AG04449 (cell line): ENCODE measurements at regions of chr3 and their contacts with region 1.

Region 1: DNA sequence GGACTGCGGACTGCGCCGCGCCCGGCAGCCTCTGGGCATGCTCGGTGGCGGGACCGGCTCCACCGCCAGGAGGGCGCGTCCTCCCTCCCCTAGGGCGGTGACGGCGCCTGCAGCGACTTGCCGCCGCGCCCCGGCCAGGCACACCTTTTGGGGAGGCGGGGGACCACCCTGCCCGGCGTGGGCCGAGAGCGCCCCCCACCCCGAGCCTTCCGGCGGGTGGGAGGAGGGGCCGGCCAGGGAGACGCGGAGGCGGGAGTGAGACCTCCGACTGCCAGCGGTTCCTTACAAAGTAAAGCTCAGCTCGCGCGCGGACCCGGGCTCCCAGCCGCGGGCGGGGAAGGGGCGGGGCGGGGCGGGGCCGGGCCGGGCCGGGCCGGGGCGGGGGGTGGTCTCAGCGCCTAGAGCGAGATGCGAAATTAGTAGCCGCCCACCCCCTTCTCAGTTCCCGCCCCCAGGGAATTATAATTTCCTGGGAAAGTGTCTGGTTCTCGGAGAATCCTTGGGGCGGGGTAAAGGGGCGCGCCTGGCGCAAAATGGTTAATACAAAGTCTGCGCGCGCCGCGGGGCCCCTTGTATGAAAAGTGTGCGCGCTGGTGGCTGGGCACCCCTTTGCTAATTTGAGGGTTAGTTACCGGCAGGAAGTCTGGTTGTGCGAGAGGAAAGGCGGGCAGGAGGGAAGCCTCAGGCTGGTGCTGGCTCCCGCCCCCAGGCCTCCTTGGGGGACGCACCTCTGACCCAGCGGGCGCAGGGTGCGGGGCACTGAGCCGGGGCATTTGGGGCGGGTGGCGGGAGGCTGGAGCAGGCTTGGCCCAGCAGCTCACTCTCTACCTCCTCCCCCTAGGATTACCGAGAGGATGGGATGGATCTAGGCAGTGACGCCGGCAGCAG is 224.8 kb upstream of the IL12A start:
- DNase-seq: no peak
- H3K4me3 ChIP-seq: peak overlapping the region; percentile 89
- CTCF ChIP-seq: peak; percentile 21

Region 2: GRCh38 chr3:159616212-159616825 is 147.5 kb before region 1 on chr3:
- CTCF ChIA-PET with region 1: interaction called, 13 read pairs
- POLR2A ChIA-PET with region 1: no interaction called
- DNase-seq: no peak
- H3K4me3 ChIP-seq: no peak overlapping the region
- CTCF ChIP-seq: peak; percentile 65

Region 3: DNA sequence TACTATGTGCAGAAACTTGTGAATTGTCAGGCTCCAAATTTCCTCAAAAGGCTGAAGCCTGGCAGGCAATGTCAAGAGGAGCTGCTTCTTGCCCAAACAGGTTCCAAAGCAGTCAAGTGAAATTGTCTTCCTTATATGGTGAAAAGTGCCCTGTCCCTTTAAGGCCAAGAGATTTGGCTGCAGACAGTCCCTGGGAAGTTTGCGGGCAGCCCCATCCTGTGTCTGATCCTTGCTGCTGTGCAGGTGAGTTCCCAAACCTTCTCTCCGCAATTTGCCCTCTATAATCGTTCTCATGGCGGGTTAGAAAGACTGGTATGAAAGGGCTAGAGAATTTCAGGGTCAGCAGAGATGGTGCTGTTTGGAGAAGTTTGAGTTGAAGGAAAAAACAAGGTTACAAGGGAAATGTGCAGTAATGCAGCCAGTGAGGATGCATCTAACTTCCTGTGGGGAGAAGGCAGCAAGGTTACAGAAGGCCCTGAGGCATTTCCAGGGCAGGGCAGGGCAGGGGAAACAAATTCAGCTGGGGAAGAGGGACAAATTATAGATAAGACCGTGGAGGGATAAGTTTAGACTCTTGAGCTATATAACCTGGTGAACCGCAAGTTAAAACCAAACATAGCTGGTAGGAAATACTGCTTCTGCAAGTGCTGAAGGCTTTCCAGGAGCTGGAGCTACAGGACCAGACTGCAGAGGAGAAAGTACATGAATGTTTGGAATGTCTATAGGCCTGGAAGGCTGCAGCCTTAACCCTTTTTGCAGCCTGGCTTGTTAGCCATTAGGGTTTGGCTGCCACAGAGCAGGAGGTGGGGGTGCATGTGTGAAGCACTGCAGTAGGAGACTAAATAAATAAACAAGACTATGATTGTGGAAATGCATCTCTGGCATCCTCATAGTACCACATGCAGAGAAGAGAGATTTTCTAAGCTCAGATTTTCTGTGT is 31.4 kb before region 1 on chr3:
- CTCF ChIA-PET with region 1: interaction called, 10 read pairs
- POLR2A ChIA-PET with region 1: interaction called, 39 read pairs
- DNase-seq: peak; percentile 95
- H3K4me3 ChIP-seq: peak overlapping the region; percentile 42
- CTCF ChIP-seq: no peak

Region 4: GRCh38 chr3:159775372-159775961 is 11.6 kb after region 1 on chr3:
- CTCF ChIA-PET with region 1: interaction called, 61 read pairs
- POLR2A ChIA-PET with region 1: interaction called, 9 read pairs
- DNase-seq: no peak
- H3K4me3 ChIP-seq: no peak overlapping the region
- CTCF ChIP-seq: no peak

Region 5: GRCh38 chr3:159787191-159787590 is 23.3 kb after region 1 on chr3:
- CTCF ChIA-PET with region 1: interaction called, 61 read pairs
- POLR2A ChIA-PET with region 1: interaction called, 4 read pairs
- DNase-seq: no peak
- H3K4me3 ChIP-seq: no peak overlapping the region
- CTCF ChIP-seq: no peak